Common myeloid progenitor, CD34-positive (primary cell): ENCODE measurements at regions of chr17 and their contacts with region 1.

Region 1: DNA sequence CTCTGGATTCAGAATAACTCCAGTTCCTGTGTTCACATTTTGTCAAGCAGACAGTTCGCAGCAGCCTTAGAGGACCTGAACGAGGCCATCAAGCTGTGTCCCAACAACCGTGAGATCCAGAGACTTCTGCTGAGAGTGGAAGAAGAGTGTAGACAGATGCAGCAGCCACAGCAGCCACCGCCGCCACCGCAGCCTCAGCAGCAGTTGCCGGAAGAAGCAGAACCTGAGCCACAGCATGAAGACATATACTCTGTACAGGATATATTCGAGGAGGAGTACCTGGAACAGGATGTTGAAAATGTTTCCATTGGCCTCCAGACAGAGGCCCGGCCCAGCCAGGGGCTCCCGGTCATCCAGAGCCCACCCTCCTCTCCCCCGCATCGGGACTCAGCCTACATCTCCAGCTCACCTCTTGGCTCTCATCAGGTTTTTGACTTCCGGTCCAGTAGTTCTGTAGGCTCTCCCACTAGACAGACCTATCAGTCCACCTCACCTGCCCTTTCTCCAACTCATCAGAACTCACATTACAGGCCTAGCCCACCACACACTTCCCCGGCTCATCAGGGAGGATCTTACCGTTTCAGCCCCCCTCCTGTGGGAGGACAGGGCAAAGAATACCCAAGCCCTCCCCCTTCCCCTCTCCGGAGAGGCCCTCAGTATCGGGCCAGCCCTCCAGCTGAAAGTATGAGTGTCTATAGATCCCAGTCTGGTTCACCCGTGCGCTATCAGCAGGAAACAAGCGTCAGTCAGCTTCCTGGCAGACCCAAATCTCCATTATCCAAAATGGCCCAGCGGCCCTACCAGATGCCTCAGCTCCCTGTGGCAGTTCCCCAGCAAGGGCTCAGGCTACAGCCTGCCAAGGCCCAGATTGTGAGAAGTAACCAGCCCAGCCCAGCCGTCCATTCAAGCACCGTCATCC is 25.9 kb downstream of the CYB561 start:
- DNase-seq: peak; percentile 98 to 100 (median 99)
- H3K4me3 ChIP-seq: peak overlapping the region in 4 of 7 experiments; percentile 7 to 42 (median 24)
- H3K27ac ChIP-seq: peak overlapping the region; percentile 25 to 74
- H3K4me1 ChIP-seq: peaks cover 12 to 65% (median 56%) of the 10 kb centered on the region in 4 experiments
- H3K27me3 ChIP-seq: no peaks in the 10 kb centered on the region

Region 2: DNA sequence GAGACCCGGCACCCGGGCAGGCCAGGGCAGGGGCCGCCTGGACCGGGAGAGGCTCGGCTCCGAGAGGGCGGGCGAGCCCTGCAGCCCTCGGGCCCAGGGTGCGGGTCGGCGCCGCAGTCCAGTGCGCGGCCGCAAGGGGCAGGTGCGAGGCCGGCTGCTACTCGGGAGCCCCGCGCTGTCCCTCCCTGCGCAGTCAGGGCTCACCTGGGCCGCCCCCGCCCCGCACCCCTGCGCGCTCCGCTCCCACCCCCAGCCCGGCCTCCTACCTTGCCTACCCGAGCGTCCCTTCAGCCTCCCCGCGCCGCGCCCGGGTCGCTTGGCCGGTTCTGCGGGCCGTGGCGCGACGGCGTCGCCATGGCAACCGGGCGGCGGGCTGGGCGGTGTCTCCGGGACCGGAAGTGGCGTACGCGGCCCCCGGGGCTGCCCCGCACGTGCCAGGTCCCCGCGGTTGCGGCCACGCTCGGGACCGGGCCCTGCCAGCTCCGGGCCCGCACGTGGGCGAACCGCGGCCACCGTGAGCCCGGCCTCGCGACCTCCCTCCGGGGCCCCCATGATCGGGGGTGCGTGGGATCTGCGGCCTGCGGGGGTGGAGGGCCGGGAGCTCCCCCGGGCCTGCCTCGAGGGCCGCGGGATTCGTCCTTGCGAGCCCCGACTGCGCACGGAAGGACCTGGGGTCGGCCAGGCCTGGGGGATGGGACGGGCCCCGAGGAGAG is 25.9 kb after region 1 on chr17 and contains the start of gene CYB561:
- CTCF ChIA-PET with region 1: interaction called, 359 read pairs
- POLR2A ChIA-PET with region 1: interaction called, 15 read pairs
- DNase-seq: peak; percentile 62 to 78 (median 75)
- H3K4me3 ChIP-seq: peak within 1 kb of the TSS; percentile 27 to 74 (median 63)
- H3K27ac ChIP-seq: peak within 1 kb of the TSS; percentile 74 to 88
- H3K4me1 ChIP-seq: peaks cover 0 to 81% (median 60%) of the 10 kb centered on the region in 4 experiments
- H3K27me3 ChIP-seq: no peaks in the 10 kb centered on the region